Dorsolateral prefrontal cortex (tissue), 120 donors: ENCODE measurements at regions of chr3 and their contacts with region 1.

Region 1: DNA sequence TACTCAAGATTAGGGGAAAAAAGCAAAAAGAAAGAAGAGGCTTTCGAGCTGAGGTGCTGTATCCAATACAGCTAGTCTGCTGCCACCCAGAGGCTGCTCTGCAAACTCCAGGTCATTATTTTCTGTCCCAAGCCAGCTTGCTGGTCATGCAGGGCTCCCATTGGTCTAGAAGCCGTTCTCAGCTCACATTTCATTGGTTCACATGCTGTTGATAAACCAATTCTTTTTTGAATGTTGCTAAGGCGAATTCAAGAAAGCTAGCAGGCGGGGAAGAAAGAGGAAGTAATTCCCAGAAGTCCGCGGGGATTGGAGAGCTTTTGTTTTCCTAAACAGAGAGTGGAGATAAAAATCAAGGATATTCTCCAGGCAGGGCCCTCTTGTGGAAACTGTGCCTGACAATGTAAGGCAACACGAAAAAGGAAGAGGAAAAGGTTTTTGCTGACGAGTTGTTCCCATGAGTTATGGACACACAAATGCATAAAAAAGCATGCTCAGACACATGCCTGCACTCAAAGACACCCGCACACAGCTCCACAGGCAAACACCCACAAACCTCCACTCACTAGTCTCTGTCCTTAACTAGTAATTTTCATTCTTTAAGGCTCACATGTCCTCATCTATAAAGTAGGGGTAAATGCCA is 33.4 kb downstream of the FSTL1 start:
- DNase-seq: peak; percentile 77 to 98 (median 93)
- H3K4me3 ChIP-seq: peak overlapping the region; percentile 12 to 63 (median 46)
- H3K27ac ChIP-seq: peak overlapping the region in 57 of 59 donors; percentile 0 to 94 (median 84)
- H3K27me3 ChIP-seq: no peaks in the 10 kb centered on the region
- CTCF ChIP-seq: peak; percentile 86 to 99 (median 95)

Region 2: DNA sequence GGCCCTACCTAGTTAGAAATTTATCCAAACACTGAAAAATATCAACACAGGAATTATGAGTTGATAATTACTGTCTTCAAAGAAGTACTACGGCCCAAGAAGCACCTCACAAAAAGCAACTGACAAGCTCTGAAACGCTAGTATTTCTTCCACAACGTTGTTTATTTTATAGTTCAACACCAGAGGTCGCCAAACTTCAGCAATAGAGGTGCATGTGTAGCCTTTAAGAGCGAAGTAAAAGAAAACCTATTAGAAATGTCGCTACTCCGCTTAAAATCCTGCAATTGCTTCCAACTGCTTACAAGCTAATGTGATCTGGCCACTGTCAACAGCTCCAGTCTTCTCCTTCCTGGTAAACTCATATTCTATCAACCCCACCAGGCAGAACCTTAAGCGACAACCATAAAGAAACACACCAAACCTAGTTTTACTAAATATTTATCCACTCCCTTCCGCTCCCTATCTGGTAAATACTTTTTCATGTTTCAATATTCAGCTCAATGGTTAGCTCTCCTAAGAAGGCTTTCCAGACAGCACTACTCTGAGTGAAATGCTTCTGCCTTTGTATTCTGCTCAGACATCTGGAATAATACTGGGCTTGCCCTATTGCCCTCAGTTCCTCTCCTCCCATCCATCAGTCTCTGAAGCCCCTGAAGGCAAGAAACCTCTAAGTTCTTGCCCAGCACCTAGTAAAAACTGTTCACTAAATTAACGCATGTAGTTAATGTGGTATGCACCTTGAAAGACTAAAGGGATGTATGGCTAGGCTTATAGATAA is 525.3 kb before region 1 on chr3:
- intact Hi-C with region 1: loop called in 1 of 2 experiments (anchors 10 kb)
- DNase-seq: peak in 1 of 10 donors; percentile 16
- H3K4me3 ChIP-seq: peak overlapping the region in 19 of 59 donors; percentile 6 to 47 (median 25)
- H3K27ac ChIP-seq: no peak overlapping the region
- H3K27me3 ChIP-seq: no peaks in the 10 kb centered on the region
- CTCF ChIP-seq: peak; percentile 28 to 94 (median 75)

Region 3: GRCh38 chr3:120239644-120240043 is 177.7 kb before region 1 on chr3:
- intact Hi-C with region 1: loop called (anchors 1 to 5 kb)
- DNase-seq: no peak
- H3K4me3 ChIP-seq: no peak overlapping the region
- H3K27ac ChIP-seq: no peak overlapping the region
- H3K27me3 ChIP-seq: no peaks in the 10 kb centered on the region
- CTCF ChIP-seq: no peak

Region 4: DNA sequence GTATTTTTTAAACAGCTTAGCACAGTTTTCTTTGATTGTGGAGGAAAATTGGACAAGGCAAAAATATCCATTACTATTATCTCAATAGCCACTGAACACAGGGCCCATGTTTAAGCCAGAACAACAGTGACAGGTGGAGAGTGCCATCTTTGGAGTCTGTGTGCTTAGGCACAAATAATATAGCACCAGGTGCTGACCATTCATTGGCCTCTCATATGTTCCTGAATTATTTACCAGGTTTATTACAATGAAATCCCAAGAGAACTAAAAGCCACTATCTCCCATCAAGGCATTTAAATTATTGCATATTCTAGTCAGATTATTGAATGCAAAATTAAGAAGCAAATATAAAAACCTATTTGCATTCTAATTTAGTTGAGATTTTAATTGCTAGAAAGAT is 172.0 kb before region 1 on chr3:
- intact Hi-C with region 1: loop called (anchors 1 to 5 kb)
- DNase-seq: no peak
- H3K4me3 ChIP-seq: no peak overlapping the region
- H3K27ac ChIP-seq: no peak overlapping the region
- H3K27me3 ChIP-seq: no peaks in the 10 kb centered on the region
- CTCF ChIP-seq: no peak

Region 5: DNA sequence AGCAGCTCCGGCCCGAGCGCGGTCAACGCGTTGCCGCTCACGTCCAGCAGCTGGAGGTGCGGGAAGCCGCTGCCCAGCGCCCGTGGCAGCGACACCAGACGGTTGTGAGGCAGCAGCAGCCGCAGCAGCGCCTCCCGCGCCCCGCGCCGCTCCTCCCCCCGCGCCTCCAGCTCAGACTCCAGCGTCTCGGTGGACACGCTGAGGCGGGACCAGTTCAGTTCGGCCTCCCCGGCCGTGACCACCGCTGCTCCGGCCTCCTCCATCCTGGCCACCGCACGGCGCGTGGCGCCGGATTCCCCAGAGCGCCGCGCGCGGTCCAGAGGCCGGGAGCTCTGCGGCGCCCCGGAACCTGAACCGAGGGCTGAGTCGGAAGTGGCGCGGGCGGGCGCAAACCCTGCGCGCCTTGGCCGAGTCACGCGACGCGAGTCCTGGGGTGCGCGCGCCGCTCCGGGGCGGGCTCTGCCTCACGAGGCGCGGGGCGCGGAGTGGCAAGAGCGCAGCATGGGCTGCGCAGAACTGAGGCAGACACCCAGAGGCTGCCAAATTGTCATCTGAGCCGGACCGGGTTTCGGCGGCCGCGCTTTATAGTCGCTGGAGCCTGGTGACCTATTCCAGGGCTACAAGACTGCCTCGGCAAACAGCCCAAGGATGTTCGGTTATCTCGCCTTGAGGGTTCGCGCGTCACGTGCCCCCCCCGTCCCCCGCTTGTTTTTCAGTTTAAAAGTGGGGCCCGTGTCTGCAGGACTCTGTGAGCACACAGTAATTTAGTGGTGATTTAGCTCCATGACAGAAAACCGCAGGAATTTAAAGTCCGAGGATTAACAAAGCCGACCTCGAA is 68.2 kb before region 1 on chr3 and contains the start of gene LRRC58:
- intact Hi-C with region 1: loop called (anchors 2 to 5 kb)
- DNase-seq: peak; percentile 71 to 89 (median 82)
- H3K4me3 ChIP-seq: peak within 1 kb of the TSS; percentile 64 to 99 (median 90)
- H3K27ac ChIP-seq: peak within 1 kb of the TSS; percentile 65 to 99 (median 96)
- H3K27me3 ChIP-seq: no peaks in the 10 kb centered on the region
- CTCF ChIP-seq: peak in 51 of 56 donors; percentile 4 to 70 (median 46)
- total RNA-seq, gene LRRC58: 15.6 to 29.6 (median 20.9) TPM

Region 6: GRCh38 chr3:120795017-120795648 is 377.7 kb after region 1 on chr3:
- intact Hi-C with region 1: loop called in 1 of 2 experiments (anchors 10 kb)
- DNase-seq: peak; percentile 51 to 86 (median 69)
- H3K4me3 ChIP-seq: no peak overlapping the region
- H3K27ac ChIP-seq: no peak overlapping the region
- H3K27me3 ChIP-seq: no peaks in the 10 kb centered on the region
- CTCF ChIP-seq: peak; percentile 51 to 87 (median 77)